ENCODE measurements at regions of chr22 and their contacts with region 1.

Region 1: DNA sequence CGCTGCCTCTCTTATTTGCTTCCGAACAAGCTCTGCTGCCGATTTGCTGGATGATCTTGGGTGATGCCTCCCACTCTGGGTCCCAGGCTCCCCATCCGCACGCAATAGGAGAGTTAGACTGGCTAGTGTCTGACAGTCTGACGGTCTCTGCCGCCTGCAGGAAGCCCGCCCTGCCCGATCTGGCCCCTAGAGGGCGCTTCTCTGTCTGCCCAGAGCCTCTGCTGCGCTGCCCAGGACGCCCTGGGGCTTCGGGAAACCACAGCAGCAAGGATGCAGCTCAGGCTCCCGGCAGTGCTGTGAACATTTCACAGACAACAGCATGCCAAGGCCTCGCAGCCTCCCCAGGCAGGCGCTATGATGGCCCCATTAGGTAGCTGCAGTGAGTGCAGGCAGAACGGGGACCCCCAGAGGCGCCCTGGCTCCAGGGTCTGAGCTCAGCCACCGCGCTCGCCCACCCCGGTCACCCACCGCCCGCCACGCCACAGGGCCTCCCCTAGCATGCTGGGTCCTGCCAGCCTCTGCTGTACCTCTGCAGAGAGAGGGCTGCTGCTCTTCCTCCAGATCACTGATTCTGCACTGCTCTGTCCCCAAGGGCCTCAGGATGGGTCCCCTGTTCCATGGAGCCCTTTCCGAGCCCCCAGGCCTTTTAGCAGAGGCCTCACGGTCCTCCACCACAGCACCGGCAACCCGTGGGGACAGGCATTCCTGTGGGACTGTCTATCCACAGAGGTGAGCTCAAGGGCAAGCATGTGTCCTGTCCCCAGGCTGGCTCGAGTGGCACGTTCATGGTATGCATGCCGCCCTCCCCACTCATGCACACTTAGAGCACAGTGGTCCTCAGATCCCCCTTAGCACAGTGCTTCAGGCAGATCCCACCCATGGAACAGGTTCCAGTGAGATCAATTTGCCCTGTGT is 4.3 kb upstream of the BAIAP2L2 start:
- DNase-seq: peak; percentile 83 to 89
- ATAC-seq: peak; percentile 87 to 98 (median 94)
- H3K4me3 ChIP-seq: no peak overlapping the region
- H3K27ac ChIP-seq: no peak overlapping the region
- H3K4me1 ChIP-seq: peaks cover 0 to 12% (median 8%) of the 10 kb centered on the region in 9 donors
- H3K27me3 ChIP-seq: no peaks in the 10 kb centered on the region
- CTCF ChIP-seq: peak; percentile 87 to 98 (median 95)

Region 2: GRCh38 chr22:38167988-38168431 is 53.3 kb after region 1 on chr22:
- intact Hi-C with region 1: loop called in 4 of 10 experiments (anchors 5 to 10 kb)
- DNase-seq: peak; percentile 66 to 75
- ATAC-seq: peak; percentile 41 to 84 (median 71)
- H3K4me3 ChIP-seq: no peak overlapping the region
- H3K27ac ChIP-seq: peak overlapping the region in 8 of 10 donors; percentile 40 to 78 (median 62)
- H3K4me1 ChIP-seq: peaks cover 8 to 66% (median 36%) of the 10 kb centered on the region in 9 donors
- H3K27me3 ChIP-seq: no peaks in the 10 kb centered on the region
- CTCF ChIP-seq: no peak

Region 3: DNA sequence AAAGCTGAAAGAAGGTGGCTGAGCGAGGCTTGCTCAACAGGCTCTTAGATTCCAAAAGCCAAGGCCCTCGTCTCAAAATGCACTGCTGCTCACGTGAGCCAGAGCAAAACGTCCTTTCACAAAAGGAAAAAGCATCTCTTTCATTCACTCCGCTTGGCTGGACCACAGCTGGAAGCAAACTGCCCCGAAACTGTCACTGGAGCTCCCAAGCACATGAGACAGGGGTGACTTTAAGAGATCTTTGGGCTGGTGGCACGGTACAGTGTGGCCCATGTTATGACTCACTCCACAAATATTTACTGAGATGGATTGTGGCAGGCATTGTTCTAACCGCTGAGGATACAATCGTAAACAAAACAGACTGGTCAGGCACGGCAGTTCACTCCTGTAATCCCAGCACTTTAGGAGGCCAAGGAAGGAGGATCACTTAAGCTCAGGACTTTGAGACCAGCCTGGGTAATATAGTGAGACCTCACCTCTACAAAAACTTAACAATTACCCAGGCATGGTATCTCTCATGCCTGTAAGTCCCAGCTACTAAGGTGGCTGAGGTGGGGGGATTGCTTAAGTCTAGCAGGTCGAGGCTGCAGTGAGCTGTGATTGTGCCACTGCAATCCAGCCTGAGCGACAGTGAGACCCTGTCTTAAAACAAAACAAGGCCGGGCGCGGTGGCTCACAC is 63.3 kb after region 1 on chr22:
- intact Hi-C with region 1: no loop called
- DNase-seq: no peak
- ATAC-seq: peak in 3 of 8 donors; percentile 24 to 45 (median 30)
- H3K4me3 ChIP-seq: no peak overlapping the region
- H3K27ac ChIP-seq: peak overlapping the region; percentile 67 to 89 (median 78)
- H3K4me1 ChIP-seq: peaks cover 20 to 78% (median 52%) of the 10 kb centered on the region in 9 donors
- H3K27me3 ChIP-seq: no peaks in the 10 kb centered on the region
- CTCF ChIP-seq: no peak

Region 4: DNA sequence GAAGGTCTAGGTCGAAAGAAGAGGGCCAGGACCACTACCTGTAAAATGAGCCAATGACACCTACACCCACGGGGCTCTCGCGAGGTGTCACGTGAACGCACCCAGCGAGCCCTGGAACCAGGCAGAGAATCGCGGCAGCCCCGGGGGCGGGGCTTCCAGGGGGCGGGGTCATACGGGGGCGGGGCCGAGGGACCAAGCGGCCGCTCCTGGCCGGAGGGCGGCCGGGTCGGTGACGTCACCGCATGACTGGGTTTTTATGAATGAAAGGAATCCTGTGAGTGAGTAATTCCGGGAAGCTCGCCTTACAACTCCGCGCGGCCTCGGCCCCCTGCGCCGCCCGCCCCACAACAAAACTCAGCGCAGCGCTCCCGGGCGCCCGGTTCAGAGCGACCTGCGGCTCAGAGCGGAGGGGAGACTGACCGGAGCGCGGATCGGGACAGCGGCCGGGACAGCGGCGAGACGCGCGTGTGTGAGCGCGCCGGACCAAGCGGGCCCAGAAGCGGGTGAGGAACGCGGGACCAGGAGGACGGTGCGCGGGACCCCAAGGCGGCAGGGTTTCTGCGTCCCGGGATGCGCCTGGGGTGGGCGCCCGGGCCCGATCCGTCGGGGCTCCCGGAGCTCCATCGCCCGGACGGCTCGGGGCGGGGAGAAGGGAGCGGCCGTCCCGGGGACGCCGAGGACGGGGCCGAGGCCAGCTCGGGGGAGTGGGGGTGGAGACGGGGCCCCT is 87.1 kb after region 1 on chr22 and contains the start of gene MAFF:
- intact Hi-C with region 1: loop called in 2 of 10 experiments (anchors 5 to 10 kb)
- DNase-seq: peak; percentile 95 to 96
- ATAC-seq: peak; percentile 81 to 90 (median 87)
- H3K4me3 ChIP-seq: peak within 1 kb of the TSS; percentile 67 to 97 (median 84)
- H3K27ac ChIP-seq: peak within 1 kb of the TSS; percentile 94 to 100 (median 99)
- H3K4me1 ChIP-seq: peaks cover 17 to 42% (median 31%) of the 10 kb centered on the region in 9 donors
- H3K27me3 ChIP-seq: no peaks in the 10 kb centered on the region
- CTCF ChIP-seq: no peak
- total RNA-seq, gene MAFF: 2.9 to 21.2 (median 5.3) TPM

Region 5: DNA sequence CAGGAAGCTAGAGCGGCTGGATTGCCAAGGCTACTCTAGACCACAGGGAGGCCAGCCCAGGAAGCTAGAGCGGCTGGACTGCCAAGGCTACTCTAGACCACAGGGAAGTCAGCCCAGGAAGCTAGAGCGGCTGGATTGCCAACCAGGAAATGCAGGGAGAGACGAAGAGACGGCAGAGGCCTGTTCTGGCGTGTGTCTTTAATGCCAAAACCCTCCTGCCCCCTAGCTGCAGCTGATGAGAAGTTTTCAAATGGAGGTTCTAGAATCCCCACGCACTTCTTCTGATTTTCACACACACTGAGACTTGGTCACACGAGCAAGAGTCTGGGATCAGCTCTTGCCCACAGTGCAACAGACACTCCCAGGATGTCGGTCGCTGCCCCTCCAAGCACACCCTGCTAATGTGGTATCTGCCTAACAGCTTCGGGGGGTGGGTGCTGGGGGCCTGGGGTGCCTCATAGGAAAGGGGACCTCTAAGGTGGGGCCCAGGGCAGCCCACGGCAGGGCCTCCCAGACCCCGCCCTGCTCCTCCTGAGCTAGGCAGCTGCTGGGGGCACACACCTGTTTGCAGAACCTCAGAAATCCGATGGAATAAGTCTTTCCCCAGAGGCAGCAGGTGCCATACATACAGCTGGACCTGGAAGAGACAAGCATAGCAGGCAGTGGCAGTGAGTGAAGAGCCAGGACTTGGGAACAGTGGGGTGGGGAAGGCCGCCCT is 115.5 kb after region 1 on chr22:
- intact Hi-C with region 1: loop called in 6 of 10 experiments (anchors 5 to 10 kb)
- DNase-seq: peak in 1 of 2 donors; percentile 43
- ATAC-seq: peak in 4 of 8 donors; percentile 14 to 18 (median 16)
- H3K4me3 ChIP-seq: no peak overlapping the region
- H3K27ac ChIP-seq: peak overlapping the region in 8 of 10 donors; percentile 40 to 75 (median 55)
- H3K4me1 ChIP-seq: peaks cover 11 to 70% (median 26%) of the 10 kb centered on the region in 9 donors
- H3K27me3 ChIP-seq: no peaks in the 10 kb centered on the region
- CTCF ChIP-seq: peak in 8 of 9 donors; percentile 25 to 54 (median 46)

Region 6: GRCh38 chr22:38347897-38348750 is 233.4 kb after region 1 on chr22:
- intact Hi-C with region 1: loop called in 7 of 10 experiments (anchors 5 to 10 kb)
- DNase-seq: no peak
- ATAC-seq: peak in 4 of 8 donors; percentile 7 to 38 (median 28)
- H3K4me3 ChIP-seq: no peak overlapping the region
- H3K27ac ChIP-seq: no peak overlapping the region
- H3K4me1 ChIP-seq: peaks cover 0 to 13% (median 2%) of the 10 kb centered on the region in 9 donors
- H3K27me3 ChIP-seq: peaks cover 0 to 40% (median 0%) of the 10 kb centered on the region in 7 donors
- CTCF ChIP-seq: no peak

Measured in heart right ventricle (tissue), 16 donors.